Left colon (tissue), 2 donors: ENCODE measurements at regions of chr5 and their contacts with region 1.

Region 1: GRCh38 chr5:131165119-131165727 is at the start of gene HINT1:
- DNase-seq: peak; percentile 92 to 97
- ATAC-seq: peak; percentile 85
- total RNA-seq, gene HINT1: 303 to 318 TPM

Region 2: GRCh38 chr5:131263648-131264450 is 98.6 kb after region 1 on chr5 and contains the start of gene CDC42SE2:
- intact Hi-C with region 1: loop called in 1 of 2 experiments (anchors 10 kb)
- DNase-seq: peak; percentile 78 to 88
- ATAC-seq: peak; percentile 91
- total RNA-seq, gene CDC42SE2: 106 to 114 TPM

Region 3: GRCh38 chr5:131321066-131321465 is 155.8 kb after region 1 on chr5:
- intact Hi-C with region 1: no loop called
- DNase-seq: no peak
- ATAC-seq: no peak

Region 4: GRCh38 chr5:132050136-132050535 is 884.9 kb after region 1 on chr5:
- intact Hi-C with region 1: no loop called
- DNase-seq: no peak
- ATAC-seq: no peak